CD8-positive, alpha-beta T cell (primary cell): ENCODE measurements at regions of chr13 and their contacts with region 1.

Region 1: DNA sequence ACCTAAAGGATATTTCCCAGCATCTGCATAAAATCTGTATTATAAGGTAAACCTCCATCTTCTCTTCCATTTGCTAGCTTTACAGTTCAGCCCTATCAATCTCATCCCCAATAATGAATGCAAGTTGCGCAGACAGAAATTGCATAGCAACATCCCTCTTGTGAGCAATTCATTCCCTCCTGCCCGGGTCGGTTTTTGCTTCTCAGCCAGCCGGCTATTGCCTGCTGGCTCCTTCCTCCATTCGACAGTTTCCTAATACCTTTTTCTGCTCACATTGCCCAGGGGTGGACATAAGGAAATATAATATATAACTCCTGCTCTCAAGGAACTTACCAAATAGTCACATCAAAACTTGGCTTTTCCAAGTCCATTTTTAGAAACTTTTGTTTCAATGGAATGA is 125.2 kb downstream of the FGF9 start:
- DNase-seq: no peak
- ATAC-seq: no peak
- H3K4me3 ChIP-seq: no peak overlapping the region
- H3K4me3 Mint-ChIP-seq: no peak overlapping the region
- H3K27ac ChIP-seq: no peak overlapping the region
- H3K27ac Mint-ChIP-seq: no peak overlapping the region
- H3K4me1 ChIP-seq: no peaks in the 10 kb centered on the region
- H3K4me1 Mint-ChIP-seq: no peaks in the 10 kb centered on the region
- H3K27me3 ChIP-seq: no peaks in the 10 kb centered on the region
- H3K27me3 Mint-ChIP-seq: peaks cover 4% of the 10 kb centered on the region
- CTCF ChIP-seq: no peak

Region 2: DNA sequence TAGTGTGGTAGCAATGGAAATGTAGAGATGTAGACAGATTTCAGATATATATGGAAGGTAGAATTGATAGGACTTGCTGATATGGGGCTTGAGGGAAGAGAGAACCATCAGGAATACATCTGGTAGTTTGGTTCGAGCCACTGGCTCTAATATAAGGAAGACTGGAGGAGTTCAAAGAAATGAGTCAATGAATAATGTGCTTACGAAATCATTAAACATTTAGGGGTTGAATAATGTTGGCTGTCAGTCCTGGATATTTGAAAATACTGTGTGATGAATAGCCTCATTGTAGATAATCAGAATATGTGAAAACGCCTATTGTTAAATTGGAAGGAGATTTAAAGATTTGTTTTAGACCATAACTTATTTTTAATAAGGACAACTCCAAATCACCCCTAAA is 1406.3 kb after region 1 on chr13:
- CTCF ChIA-PET with region 1: no interaction called
- POLR2A ChIA-PET with region 1: no interaction called
- intact Hi-C with region 1: loop called in 1 of 2 experiments (anchors 10 kb)
- DNase-seq: no peak
- ATAC-seq: no peak
- H3K4me3 ChIP-seq: no peak overlapping the region
- H3K4me3 Mint-ChIP-seq: no peak overlapping the region
- H3K27ac ChIP-seq: no peak overlapping the region
- H3K27ac Mint-ChIP-seq: no peak overlapping the region
- H3K4me1 ChIP-seq: no peaks in the 10 kb centered on the region
- H3K4me1 Mint-ChIP-seq: no peaks in the 10 kb centered on the region
- H3K27me3 ChIP-seq: no peaks in the 10 kb centered on the region
- H3K27me3 Mint-ChIP-seq: no peaks in the 10 kb centered on the region
- CTCF ChIP-seq: no peak